Adrenal gland (tissue), 19 donors: ENCODE measurements at regions of chr1 and their contacts with region 1.

Region 1: GRCh38 chr1:203273206-203273868 is 32.0 kb upstream of the BTG2 start:
- DNase-seq: peak; percentile 86 to 96 (median 90)
- H3K4me3 ChIP-seq: peak overlapping the region in 1 of 4 donors; percentile 25
- H3K27ac ChIP-seq: peak overlapping the region in 3 of 5 donors; percentile 28 to 85 (median 78)
- H3K4me1 ChIP-seq: peaks cover 5 to 37% of the 10 kb centered on the region in 2 donors
- H3K27me3 ChIP-seq: no peaks in the 10 kb centered on the region
- CTCF ChIP-seq: peak; percentile 96 to 99 (median 98)
- POLR2A ChIP-seq: no peak

Region 2: DNA sequence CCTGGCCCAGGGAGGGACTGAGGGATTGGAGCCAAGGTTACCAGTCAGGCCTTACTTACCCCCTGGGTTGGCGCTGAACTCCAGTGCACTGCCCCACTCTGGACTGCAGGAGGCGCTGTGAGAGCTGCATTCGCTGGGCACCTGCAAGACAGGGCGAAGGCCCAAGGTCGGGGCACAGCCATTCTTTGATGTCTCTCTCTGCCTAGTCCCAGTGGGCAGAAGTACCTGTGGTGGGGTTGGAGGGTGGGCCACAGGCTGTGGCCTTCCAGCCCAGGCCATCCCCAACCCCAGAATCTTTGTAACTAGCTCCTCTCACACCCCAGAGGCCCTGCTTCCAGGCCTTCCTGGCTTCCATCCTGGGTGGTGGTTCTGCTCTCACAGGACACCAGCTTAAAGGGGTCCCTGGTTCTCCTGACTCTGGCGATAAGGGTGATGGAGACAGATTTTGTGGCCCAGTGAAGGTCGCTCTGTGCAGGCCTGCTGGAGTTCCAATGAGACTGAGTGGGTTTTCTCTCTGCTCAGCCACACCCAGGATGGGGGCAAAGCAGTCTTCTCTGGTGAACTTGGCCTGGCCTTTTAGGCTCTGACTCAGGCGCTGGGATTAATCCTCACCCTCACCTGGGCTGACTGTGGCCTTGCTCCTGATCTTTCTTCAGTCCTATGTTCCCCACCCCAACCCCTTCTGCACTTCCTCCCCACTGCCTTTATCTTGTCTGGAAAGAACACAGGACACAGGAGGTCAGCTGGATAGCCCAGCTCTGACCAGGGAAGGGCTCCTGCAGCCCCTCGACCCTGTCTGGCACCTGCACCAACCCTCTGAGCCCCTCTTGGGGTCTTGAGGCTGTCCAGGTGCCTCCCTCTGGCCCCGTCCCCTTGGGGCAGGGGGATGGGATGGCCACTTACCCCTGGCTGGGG is 188.5 kb before region 1 on chr1:
- intact Hi-C with region 1: no loop called
- DNase-seq: peak in 2 of 7 donors; percentile 13 to 48
- H3K4me3 ChIP-seq: no peak overlapping the region
- H3K27ac ChIP-seq: no peak overlapping the region
- H3K4me1 ChIP-seq: no peaks in the 10 kb centered on the region
- H3K27me3 ChIP-seq: no peaks in the 10 kb centered on the region
- CTCF ChIP-seq: no peak
- POLR2A ChIP-seq: no peak

Region 3: DNA sequence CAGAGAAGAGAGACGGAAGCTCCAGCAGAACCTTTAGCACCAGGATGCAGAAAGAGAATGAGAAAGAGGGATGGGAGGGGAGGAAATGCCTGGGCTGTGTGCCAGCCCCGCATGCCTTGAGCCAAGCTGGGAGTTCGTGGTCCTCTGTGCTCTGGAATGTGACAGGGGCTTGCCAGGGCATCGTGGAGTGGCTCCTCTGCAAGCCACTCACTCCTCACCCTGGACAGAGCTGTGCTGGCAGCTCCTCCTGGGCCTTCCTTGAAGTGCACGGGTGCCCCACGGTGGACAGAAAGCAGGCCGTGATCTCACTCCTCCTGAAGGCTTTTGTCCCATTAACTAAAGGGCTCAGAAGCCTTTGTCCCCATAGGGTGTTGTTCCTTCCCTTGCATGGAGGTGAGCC is 167.4 kb after region 1 on chr1:
- intact Hi-C with region 1: loop called in 1 of 2 experiments (anchors 10 kb)
- DNase-seq: peak; percentile 69 to 89 (median 82)
- H3K4me3 ChIP-seq: no peak overlapping the region
- H3K27ac ChIP-seq: peak overlapping the region in 2 of 5 donors; percentile 49 to 65
- H3K4me1 ChIP-seq: peaks cover 0 to 9% of the 10 kb centered on the region in 2 donors
- H3K27me3 ChIP-seq: no peaks in the 10 kb centered on the region
- CTCF ChIP-seq: peak; percentile 19 to 77 (median 69)
- POLR2A ChIP-seq: no peak

Region 4: GRCh38 chr1:203486618-203487370 is 213.5 kb after region 1 on chr1:
- intact Hi-C with region 1: loop called (anchors 5 to 10 kb)
- DNase-seq: no peak
- H3K4me3 ChIP-seq: peak overlapping the region in 1 of 4 donors; percentile 31
- H3K27ac ChIP-seq: peak overlapping the region in 2 of 5 donors; percentile 68 to 70
- H3K4me1 ChIP-seq: peaks cover 0 to 12% of the 10 kb centered on the region in 2 donors
- H3K27me3 ChIP-seq: no peaks in the 10 kb centered on the region
- CTCF ChIP-seq: no peak
- POLR2A ChIP-seq: no peak